Psoas muscle (tissue), 8 donors: ENCODE measurements at regions of chr3 and their contacts with region 1.

Region 1: DNA sequence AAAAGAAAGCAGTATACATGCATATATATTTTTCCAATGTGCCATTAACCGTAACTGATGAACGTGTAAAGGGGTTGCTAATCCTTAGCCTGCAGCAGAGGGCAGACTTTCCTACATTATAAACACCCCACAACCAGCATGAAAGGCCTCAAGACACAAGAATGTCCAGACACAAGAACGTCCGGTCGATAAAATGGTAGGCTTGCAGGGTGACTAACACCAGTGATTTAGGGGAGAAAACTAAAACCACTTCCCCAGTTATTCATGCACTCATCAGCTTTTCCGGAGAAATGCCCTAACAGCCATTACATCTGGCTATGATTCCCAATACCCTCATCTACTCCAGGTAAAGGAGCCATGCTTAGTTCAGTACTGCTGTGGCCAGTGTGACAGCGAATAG is 57.4 kb downstream of the LRTM1 start:
- DNase-seq: no peak
- ATAC-seq: peak; percentile 88 to 96 (median 90)
- H3K4me3 ChIP-seq: no peak overlapping the region
- H3K27ac ChIP-seq: no peak overlapping the region
- H3K4me1 ChIP-seq: no peaks in the 10 kb centered on the region
- H3K27me3 ChIP-seq: no peaks in the 10 kb centered on the region
- CTCF ChIP-seq: peak; percentile 61

Region 2: DNA sequence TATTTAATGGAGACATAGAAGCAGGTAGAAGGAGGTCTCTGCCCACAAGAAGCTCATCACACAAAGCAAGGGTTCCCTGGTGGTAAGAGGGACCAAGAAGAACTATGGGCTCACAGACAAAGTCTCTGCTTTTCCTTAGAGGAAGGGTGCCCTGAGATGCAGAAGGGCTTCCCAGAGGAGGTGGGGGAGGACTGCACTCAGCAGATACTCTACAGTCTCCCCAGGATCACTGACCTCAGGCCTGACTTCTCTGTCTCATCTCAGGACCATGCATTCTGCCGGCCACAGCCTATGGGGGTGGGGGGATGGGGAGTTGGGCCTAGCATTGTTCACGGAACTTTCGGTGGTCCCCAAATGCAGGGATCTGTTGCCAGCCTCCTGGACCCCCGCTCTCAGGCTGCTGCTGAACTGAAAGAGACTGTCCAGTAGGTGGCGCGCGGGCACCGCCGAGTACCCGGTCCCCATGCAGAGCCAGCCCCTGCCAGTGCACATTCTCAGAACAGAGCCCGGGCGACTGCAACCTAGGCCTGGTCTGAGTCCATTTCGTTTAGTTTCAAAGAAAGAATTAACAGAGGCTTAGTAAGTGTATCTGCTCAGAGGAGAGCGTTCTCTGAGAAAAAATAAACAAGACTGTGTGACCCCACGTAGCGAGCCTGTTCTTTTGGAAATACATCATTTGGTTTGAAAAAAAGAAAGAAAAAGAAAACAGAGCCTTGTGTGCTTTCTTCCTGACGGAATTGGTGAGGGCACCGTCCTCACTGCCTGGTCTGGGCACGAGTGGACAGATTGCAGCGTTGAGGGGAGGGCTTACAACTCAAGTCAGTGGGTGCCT is 16.6 kb before region 1 on chr3:
- intact Hi-C with region 1: no loop called
- DNase-seq: peak; percentile 78 to 89
- ATAC-seq: peak; percentile 91 to 97 (median 94)
- H3K4me3 ChIP-seq: no peak overlapping the region
- H3K27ac ChIP-seq: no peak overlapping the region
- H3K4me1 ChIP-seq: peaks cover 4% of the 10 kb centered on the region
- H3K27me3 ChIP-seq: no peaks in the 10 kb centered on the region
- CTCF ChIP-seq: peak; percentile 92

Region 3: GRCh38 chr3:54931182-54931581 is 60.8 kb after region 1 on chr3:
- intact Hi-C with region 1: loop called in 1 of 2 experiments (anchors 5 kb)
- DNase-seq: no peak
- ATAC-seq: peak in 1 of 4 donors; percentile 10
- H3K4me3 ChIP-seq: no peak overlapping the region
- H3K27ac ChIP-seq: no peak overlapping the region
- H3K4me1 ChIP-seq: peaks cover 18% of the 10 kb centered on the region
- H3K27me3 ChIP-seq: no peaks in the 10 kb centered on the region
- CTCF ChIP-seq: no peak

Region 4: DNA sequence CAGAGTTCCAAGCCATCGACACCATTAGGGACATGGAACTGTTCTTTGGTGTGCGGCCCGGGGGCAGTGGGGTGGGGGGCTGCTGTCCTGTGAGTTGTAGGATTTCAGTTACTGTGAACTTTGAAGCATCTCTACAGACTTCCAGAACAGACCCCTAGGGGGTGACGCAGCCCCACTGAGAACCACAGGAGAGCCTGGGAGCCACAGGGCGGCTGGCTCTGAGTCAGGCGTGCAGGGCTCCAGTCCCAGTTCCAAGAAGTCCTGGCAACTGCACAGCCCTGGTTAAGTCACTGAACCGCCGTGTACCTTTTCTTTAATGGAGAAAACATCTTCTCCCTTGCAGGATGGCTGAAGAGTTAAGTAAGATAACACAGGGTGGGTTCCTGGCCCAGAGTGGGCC is 81.0 kb after region 1 on chr3:
- intact Hi-C with region 1: loop called in 1 of 2 experiments (anchors 5 kb)
- DNase-seq: peak; percentile 86 to 92
- ATAC-seq: peak; percentile 96 to 100 (median 98)
- H3K4me3 ChIP-seq: no peak overlapping the region
- H3K27ac ChIP-seq: no peak overlapping the region
- H3K4me1 ChIP-seq: peaks cover 14% of the 10 kb centered on the region
- H3K27me3 ChIP-seq: no peaks in the 10 kb centered on the region
- CTCF ChIP-seq: peak; percentile 75

Region 5: DNA sequence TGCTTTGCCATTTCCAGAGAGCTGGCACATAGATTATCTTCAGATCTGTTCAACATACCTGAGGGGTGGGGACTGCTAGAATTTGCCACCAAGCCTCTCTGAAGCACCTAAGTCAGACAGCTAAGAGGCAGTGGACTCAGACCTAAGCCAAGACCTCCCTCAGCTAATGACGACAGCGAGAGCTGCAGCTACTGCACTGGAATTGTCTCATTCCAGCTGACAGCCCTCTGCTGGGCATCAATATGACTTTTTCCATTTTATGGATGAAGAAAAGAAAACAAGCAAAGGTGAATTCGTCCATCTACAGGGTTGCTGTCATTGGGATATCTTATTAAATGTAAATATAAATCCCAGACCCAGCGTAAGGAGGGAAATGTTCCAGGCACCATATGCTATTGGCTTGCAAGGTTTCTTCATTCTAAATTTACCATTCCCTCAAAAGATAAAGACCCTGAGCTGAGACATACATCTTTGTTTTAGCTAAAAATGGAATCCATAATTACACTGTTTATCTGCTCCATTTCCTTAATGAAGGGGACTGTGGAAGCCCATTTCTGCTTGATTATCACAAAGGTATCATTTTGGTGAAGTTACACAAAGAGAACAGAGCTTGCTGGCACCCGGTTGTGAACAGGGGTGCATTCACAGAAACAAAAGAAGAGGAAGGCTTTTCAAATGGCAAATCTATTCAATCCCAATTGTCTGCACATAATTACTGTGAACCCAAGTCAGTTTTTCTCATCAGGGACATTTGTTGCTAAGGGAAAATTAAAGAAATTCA is 142.9 kb after region 1 on chr3:
- intact Hi-C with region 1: loop called in 1 of 2 experiments (anchors 10 kb)
- DNase-seq: no peak
- ATAC-seq: peak in 1 of 4 donors; percentile 39
- H3K4me3 ChIP-seq: no peak overlapping the region
- H3K27ac ChIP-seq: no peak overlapping the region
- H3K4me1 ChIP-seq: no peaks in the 10 kb centered on the region
- H3K27me3 ChIP-seq: no peaks in the 10 kb centered on the region
- CTCF ChIP-seq: no peak

Region 6: GRCh38 chr3:55091381-55092225 is 221.2 kb after region 1 on chr3:
- intact Hi-C with region 1: loop called in 1 of 2 experiments (anchors 5 kb)
- DNase-seq: no peak
- ATAC-seq: no peak
- H3K4me3 ChIP-seq: no peak overlapping the region
- H3K27ac ChIP-seq: no peak overlapping the region
- H3K4me1 ChIP-seq: no peaks in the 10 kb centered on the region
- H3K27me3 ChIP-seq: peaks cover 0 to 3% (median 0%) of the 10 kb centered on the region in 3 donors
- CTCF ChIP-seq: no peak

Region 7: DNA sequence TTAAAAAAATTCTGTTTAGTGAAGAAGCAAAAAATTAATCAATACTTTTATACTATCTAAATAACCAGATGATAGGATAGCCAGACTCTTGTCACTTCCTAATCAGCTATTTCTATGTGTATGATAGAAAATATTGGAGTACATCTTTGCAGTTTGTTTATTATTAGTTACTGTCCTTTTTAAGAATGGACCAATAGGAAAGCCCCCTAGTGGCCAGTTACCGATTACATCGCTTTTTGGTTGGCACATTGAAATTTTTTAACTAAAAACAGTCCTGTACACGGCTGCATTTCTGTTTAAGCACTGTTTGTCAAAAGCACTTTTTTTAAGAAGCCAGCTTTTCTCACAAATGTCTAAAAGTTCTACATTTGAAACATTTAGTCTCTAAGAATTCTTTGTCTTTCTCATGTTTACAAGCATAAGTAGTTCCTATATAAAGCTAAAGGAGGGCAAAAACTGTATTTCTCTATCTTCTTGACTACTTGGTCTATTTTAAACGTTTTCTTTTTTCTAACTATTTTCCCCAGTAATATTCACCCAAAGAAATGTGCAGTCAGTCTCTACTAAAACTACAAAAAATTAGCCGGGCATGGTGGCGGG is 310.6 kb after region 1 on chr3:
- intact Hi-C with region 1: loop called (anchors 5 kb)
- DNase-seq: no peak
- ATAC-seq: peak in 1 of 4 donors; percentile 53
- H3K4me3 ChIP-seq: no peak overlapping the region
- H3K27ac ChIP-seq: no peak overlapping the region
- H3K4me1 ChIP-seq: no peaks in the 10 kb centered on the region
- H3K27me3 ChIP-seq: no peaks in the 10 kb centered on the region
- CTCF ChIP-seq: peak; percentile 79